Psoas muscle (tissue), 8 donors: ENCODE measurements at regions of chr6 and their contacts with region 1.

Region 1: DNA sequence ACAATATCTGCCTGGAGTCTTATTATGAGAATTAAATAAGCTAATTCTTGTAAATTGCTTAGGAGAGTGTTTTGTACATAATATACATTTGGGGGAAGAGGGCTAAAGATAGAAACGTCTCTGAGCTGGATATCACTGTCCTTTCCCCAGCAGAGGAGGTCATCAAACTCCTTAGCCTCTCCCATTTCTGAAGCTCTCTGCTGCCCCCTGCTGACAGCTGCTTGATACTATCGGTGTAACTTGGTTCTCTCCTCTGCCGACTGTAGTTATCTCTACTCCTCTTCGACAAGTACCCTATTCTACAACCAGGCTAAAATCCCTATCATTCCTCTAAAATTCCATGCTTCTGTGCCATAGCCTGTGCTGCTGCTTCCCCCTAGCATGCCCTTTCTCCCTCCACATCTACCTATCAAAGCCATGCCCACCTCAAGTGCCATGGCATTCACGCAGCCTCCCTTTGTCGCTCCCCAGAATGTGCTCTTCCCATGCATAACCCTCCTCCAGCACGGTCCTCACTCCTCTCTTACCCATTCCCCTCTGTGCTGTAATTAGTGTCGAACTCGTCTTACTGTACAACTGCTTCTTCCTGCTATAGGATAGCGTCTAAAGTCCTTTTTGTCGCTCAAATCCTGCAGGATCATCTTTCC is 101.2 kb downstream of the EPM2A start:
- DNase-seq: peak; percentile 81 to 91
- ATAC-seq: peak; percentile 83 to 95 (median 90)
- H3K4me3 ChIP-seq: no peak overlapping the region
- H3K27ac ChIP-seq: no peak overlapping the region
- H3K4me1 ChIP-seq: peaks cover 40% of the 10 kb centered on the region
- H3K27me3 ChIP-seq: no peaks in the 10 kb centered on the region
- CTCF ChIP-seq: peak; percentile 87

Region 2: DNA sequence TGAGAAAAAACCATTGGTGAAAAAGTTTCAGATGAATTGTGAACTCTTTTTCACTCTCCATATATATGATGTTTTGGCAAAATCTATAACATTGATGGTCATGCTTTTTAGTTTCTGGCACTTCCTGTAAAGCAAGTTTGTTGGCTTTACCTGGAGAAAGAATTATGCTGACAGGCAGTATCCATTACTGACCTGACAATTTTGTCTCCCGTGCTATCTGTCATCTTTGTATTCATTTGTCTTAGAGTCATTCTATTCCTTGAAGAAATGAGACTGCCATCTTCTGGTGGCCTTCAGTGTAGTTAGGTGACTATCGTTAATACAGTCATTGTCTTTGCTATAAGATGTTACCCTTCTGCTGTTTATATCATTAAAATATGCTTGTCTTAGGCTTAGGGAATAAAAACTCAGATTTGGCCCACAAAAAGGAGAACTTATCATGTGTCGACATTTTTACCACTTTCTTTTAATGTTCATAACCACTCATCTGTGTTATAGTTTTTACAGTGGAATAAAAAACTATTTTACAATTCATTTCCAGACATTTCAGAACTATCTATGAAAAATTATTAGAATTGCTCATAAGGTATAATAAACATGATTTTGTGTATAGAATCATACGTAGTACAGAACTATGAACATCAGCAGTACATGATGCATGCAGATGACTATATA is 605.8 kb before region 1 on chr6:
- intact Hi-C with region 1: loop called in 1 of 2 experiments (anchors 10 kb)
- DNase-seq: no peak
- ATAC-seq: peak; percentile 54 to 81 (median 70)
- H3K4me3 ChIP-seq: no peak overlapping the region
- H3K27ac ChIP-seq: no peak overlapping the region
- H3K4me1 ChIP-seq: peaks cover 5% of the 10 kb centered on the region
- H3K27me3 ChIP-seq: no peaks in the 10 kb centered on the region
- CTCF ChIP-seq: peak; percentile 55

Region 3: DNA sequence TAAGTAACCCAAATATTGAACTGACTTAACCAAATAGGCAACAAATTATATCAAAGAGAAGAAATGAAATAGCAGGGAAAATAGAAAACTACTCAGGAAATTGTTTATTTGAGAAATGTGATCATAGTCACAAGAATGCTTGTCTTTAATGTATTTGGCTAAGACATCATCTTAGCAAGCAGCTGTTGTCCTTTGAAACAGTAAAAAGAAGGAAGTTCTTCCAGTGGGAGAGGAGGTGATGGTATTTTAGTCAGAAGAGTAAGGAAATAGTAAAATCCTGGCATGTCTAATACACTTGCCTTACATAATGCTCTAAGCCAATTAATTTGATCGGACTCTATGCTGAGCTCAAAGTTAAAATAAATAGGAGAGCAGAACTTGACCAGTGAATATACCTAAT is 25.3 kb before region 1 on chr6:
- intact Hi-C with region 1: no loop called
- DNase-seq: no peak
- ATAC-seq: no peak
- H3K4me3 ChIP-seq: no peak overlapping the region
- H3K27ac ChIP-seq: no peak overlapping the region
- H3K4me1 ChIP-seq: no peaks in the 10 kb centered on the region
- H3K27me3 ChIP-seq: no peaks in the 10 kb centered on the region
- CTCF ChIP-seq: no peak